ENCODE measurements at regions of chr7 and their contacts with region 1.

Region 1: DNA sequence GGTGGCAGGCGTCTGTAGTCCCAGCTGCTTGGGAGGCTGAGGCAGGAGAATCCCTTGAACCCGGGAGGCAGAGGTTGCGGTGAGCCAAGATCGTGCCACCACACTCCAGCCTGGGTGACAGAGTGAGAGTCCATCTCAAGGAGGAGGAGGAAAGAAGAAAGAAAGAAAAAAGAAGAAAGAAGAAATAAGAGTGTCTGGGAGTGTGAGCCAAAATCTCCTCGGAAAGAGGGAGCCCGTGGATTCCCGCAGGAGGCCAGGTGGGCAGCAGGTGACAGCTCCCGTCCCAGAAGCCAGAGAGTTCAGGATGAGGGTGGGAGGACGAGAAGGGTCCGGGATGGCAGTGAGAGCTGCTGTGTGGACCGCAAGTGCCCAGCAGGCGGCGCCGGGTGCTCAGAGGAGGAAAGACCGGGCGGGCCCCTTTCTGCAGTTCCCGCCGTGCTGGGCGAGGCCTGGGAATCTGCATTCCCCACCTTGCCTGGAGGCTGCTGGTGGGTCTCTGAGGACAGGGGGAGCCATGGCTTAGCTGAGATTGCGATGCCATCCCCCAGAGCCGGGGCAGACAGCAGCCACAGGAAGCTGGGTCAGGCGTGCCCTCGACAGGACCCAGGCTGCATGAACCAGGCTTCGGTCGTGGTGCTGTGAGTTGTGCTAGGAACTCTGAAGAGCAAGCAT is 17.1 kb upstream of the AMZ1 start:
- DNase-seq: peak; percentile 51
- ATAC-seq: peak; percentile 99
- H3K4me3 ChIP-seq: no peak overlapping the region
- H3K27ac ChIP-seq: no peak overlapping the region
- H3K4me1 ChIP-seq: peaks cover 0 to 7% of the 10 kb centered on the region in 2 experiments; a peak in 1 of 4 replicates
- H3K27me3 ChIP-seq: no peaks in the 10 kb centered on the region
- CTCF ChIP-seq: peak; percentile 83 to 89 (median 85)
- POLR2A ChIP-seq: no peak
- RAD21 ChIP-seq: peak; percentile 91

Region 2: GRCh38 chr7:2326951-2327350 is 343.9 kb before region 1 on chr7:
- CTCF ChIA-PET with region 1: no interaction called
- POLR2A ChIA-PET with region 1: no interaction called
- RAD21 ChIA-PET with region 1: no interaction called
- intact Hi-C with region 1: no loop called
- DNase-seq: no peak
- ATAC-seq: no peak
- H3K4me3 ChIP-seq: no peak overlapping the region
- H3K27ac ChIP-seq: no peak overlapping the region
- H3K4me1 ChIP-seq: no peaks in the 10 kb centered on the region
- H3K27me3 ChIP-seq: no peaks in the 10 kb centered on the region
- CTCF ChIP-seq: no peak
- POLR2A ChIP-seq: no peak
- RAD21 ChIP-seq: no peak

Region 3: GRCh38 chr7:2477447-2478398 is 193.1 kb before region 1 on chr7:
- CTCF ChIA-PET with region 1: no interaction called
- POLR2A ChIA-PET with region 1: no interaction called
- RAD21 ChIA-PET with region 1: no interaction called
- intact Hi-C with region 1: no loop called
- DNase-seq: peak; percentile 16
- ATAC-seq: peak; percentile 97
- H3K4me3 ChIP-seq: no peak overlapping the region
- H3K27ac ChIP-seq: no peak overlapping the region
- H3K4me1 ChIP-seq: peaks cover 7 to 11% of the 10 kb centered on the region in 2 experiments; a peak in 2 of 4 replicates
- H3K27me3 ChIP-seq: no peaks in the 10 kb centered on the region
- CTCF ChIP-seq: peak; percentile 66 to 82 (median 67)
- POLR2A ChIP-seq: no peak
- RAD21 ChIP-seq: peak; percentile 93

Region 4: DNA sequence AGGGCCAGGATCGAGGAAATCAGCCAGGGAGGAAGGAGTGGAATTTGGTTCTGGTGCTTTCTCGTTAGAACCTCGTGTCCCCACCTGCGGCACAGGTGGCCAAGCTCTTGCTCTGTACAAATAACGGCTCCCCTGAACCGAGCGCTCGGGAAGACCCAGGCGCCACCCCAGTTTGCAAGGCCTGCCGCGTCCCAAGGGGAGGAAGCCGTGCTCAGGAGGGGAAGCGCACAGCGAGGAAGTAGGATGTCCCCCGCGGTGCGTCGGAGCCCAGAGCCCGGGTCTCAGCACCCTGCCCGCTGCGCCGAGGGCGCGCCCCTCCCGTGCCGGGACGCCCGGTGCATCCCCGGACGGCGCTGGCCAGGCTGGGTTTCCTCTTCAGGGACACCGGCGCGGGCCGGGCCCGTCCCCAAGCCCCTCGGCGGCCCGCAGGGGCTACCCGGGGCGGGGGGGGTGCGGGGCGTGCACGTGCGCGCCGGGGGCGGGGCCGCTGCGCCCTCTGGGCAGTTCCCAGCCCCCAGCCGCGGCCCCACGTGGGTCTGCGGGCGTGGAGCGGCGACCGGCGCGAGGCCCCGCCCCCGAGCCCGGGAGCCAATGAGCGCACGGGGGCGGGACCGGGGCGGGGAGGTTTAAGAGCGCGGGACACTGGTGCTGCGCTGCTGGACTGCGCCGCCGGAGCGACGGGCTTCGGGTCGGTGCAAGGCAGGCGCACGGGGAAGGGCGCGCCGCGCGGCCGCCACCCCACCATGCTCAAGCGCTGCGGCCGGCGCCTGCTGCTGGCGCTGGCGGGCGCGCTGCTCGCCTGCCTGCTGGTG is 151.5 kb before region 1 on chr7 and contains the start of gene LFNG:
- CTCF ChIA-PET with region 1: no interaction called
- POLR2A ChIA-PET with region 1: no interaction called
- RAD21 ChIA-PET with region 1: no interaction called
- intact Hi-C with region 1: no loop called
- DNase-seq: peak; percentile 68
- ATAC-seq: peak; percentile 72
- H3K4me3 ChIP-seq: peak within 1 kb of the TSS; percentile 46 to 67
- H3K27ac ChIP-seq: peak within 1 kb of the TSS; percentile 59; the same call in 1 of the 2 replicates
- H3K4me1 ChIP-seq: peaks cover 40 to 69% of the 10 kb centered on the region in 2 experiments
- H3K27me3 ChIP-seq: no peaks in the 10 kb centered on the region
- CTCF ChIP-seq: no peak
- POLR2A ChIP-seq: peak; percentile 97
- RAD21 ChIP-seq: no peak
- total RNA-seq, gene LFNG: 14.3 TPM

Region 5: GRCh38 chr7:2567679-2568278 is 103.1 kb before region 1 on chr7:
- CTCF ChIA-PET with region 1: no interaction called
- POLR2A ChIA-PET with region 1: no interaction called
- RAD21 ChIA-PET with region 1: no interaction called
- intact Hi-C with region 1: no loop called
- DNase-seq: no peak
- ATAC-seq: peak; percentile 43; the same call in 1 of the 2 replicates
- H3K4me3 ChIP-seq: no peak overlapping the region
- H3K27ac ChIP-seq: no peak overlapping the region
- H3K4me1 ChIP-seq: peaks cover 16 to 20% of the 10 kb centered on the region in 2 experiments
- H3K27me3 ChIP-seq: no peaks in the 10 kb centered on the region
- CTCF ChIP-seq: peak; percentile 22 to 38 (median 24); a peak in 3 of 6 replicates
- POLR2A ChIP-seq: no peak
- RAD21 ChIP-seq: peak; percentile 60

Region 6: DNA sequence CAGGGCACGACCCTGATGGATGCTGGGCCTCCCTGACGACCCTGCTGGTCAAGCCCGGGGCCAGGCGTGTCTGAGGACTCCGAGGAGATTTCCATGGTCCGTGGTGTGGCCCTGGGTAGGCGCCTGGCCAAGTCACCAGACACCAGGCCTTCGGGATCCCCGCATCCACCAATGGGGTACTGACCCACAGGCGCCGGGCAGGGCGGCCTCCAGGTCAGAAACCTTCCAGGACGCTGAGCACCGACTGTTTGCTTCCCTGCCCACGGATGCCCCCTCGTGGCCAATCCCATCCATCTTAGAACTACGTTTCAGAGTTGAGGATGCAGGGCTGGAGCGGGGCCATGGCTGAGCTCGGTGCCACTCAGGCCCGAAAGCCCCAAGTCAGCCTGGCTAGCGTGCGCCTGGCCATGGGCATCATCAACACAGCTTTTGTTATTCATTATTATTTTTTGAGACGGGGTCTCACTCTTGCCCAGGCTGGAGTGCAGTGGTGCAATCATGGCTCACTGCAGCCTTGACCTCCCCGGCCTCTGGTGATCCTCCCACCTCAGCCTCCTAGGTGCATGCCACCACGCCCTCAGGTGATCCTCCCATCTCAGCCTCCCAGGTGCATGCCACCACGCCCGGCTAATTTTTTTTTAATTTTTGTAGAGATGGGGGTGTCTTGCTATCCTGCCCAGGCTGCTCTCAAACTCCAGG is 10.1 kb after region 1 on chr7:
- CTCF ChIA-PET with region 1: interaction called, 12 read pairs
- POLR2A ChIA-PET with region 1: no interaction called
- RAD21 ChIA-PET with region 1: interaction called in 1 of 2 experiments, 4 read pairs
- intact Hi-C with region 1: no loop called
- DNase-seq: peak; percentile 56
- ATAC-seq: peak; percentile 96
- H3K4me3 ChIP-seq: no peak overlapping the region
- H3K27ac ChIP-seq: no peak overlapping the region; the same call in 1 of the 2 replicates
- H3K4me1 ChIP-seq: peaks cover 0 to 4% of the 10 kb centered on the region in 2 experiments; a peak in 1 of 4 replicates
- H3K27me3 ChIP-seq: no peaks in the 10 kb centered on the region
- CTCF ChIP-seq: peak; percentile 73 to 87 (median 81)
- POLR2A ChIP-seq: no peak
- RAD21 ChIP-seq: peak; percentile 87

Region 7: GRCh38 chr7:2709553-2710285 is 38.9 kb after region 1 on chr7:
- CTCF ChIA-PET with region 1: interaction called, 20 read pairs
- POLR2A ChIA-PET with region 1: no interaction called
- RAD21 ChIA-PET with region 1: interaction called in 1 of 2 experiments, 4 read pairs
- intact Hi-C with region 1: loop called (anchors 1 kb)
- DNase-seq: peak; percentile 26
- ATAC-seq: peak; percentile 98
- H3K4me3 ChIP-seq: no peak overlapping the region
- H3K27ac ChIP-seq: no peak overlapping the region
- H3K4me1 ChIP-seq: peaks cover 2 to 5% of the 10 kb centered on the region in 2 experiments
- H3K27me3 ChIP-seq: no peaks in the 10 kb centered on the region
- CTCF ChIP-seq: peak; percentile 85 to 97 (median 92)
- POLR2A ChIP-seq: no peak
- RAD21 ChIP-seq: peak; percentile 93

Measured in HCT116 (cell line).